ENCODE measurements at regions of chr2 and their contacts with region 1.

Region 1: GRCh38 chr2:9656270-9656766 is 25.5 kb upstream of the YWHAQ start:
- DNase-seq: peak; percentile 71
- H3K4me3 Mint-ChIP-seq: peak overlapping the region; percentile 35
- H3K27ac Mint-ChIP-seq: peak overlapping the region; percentile 91
- H3K4me1 Mint-ChIP-seq: peaks cover 48% of the 10 kb centered on the region
- H3K27me3 Mint-ChIP-seq: peaks cover 3% of the 10 kb centered on the region

Region 2: GRCh38 chr2:9548506-9548905 is 107.8 kb before region 1 on chr2:
- intact Hi-C with region 1: loop called (anchors 1 kb)
- DNase-seq: no peak
- H3K4me3 Mint-ChIP-seq: peak overlapping the region; percentile 57
- H3K27ac Mint-ChIP-seq: peak overlapping the region; percentile 69
- H3K4me1 Mint-ChIP-seq: peaks cover 60% of the 10 kb centered on the region
- H3K27me3 Mint-ChIP-seq: no peaks in the 10 kb centered on the region

Region 3: GRCh38 chr2:9630749-9631483 is 25.4 kb before region 1 on chr2 and contains the start of gene YWHAQ:
- intact Hi-C with region 1: loop called (anchors 1 kb)
- DNase-seq: peak; percentile 97
- H3K4me3 Mint-ChIP-seq: peak within 1 kb of the TSS; percentile 97
- H3K27ac Mint-ChIP-seq: peak within 1 kb of the TSS; percentile 93
- H3K4me1 Mint-ChIP-seq: peaks cover 45% of the 10 kb centered on the region
- H3K27me3 Mint-ChIP-seq: peaks cover 9% of the 10 kb centered on the region
- total RNA-seq, gene YWHAQ: 290 and 311 TPM in 2 replicates

Region 4: GRCh38 chr2:9697909-9698308 is 41.6 kb after region 1 on chr2:
- intact Hi-C with region 1: loop called (anchors 1 kb)
- DNase-seq: no peak
- H3K4me3 Mint-ChIP-seq: peak overlapping the region; percentile 1
- H3K27ac Mint-ChIP-seq: peak overlapping the region; percentile 85
- H3K4me1 Mint-ChIP-seq: peaks cover 41% of the 10 kb centered on the region
- H3K27me3 Mint-ChIP-seq: no peaks in the 10 kb centered on the region

Region 5: DNA sequence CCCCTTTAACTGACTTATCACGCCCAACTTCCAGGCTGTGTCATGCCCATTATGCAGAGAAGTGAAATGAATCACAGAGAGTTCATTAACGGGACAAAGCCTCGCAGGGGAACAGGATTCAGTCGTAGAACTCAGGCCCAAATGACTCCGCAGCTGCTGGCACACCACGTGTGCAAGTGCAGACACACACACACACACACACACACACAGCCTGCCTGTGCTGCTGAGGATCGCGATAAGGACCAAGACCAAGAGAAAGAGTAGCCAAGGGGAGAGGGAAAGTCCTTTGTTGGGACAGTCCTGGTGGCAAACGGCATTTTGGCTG is 96.9 kb after region 1 on chr2:
- intact Hi-C with region 1: loop called (anchors 1 kb)
- DNase-seq: peak; percentile 45
- H3K4me3 Mint-ChIP-seq: peak overlapping the region; percentile 77
- H3K27ac Mint-ChIP-seq: peak overlapping the region; percentile 96
- H3K4me1 Mint-ChIP-seq: peaks cover 70% of the 10 kb centered on the region
- H3K27me3 Mint-ChIP-seq: peaks cover 34% of the 10 kb centered on the region

Region 6: GRCh38 chr2:10122386-10123280 is 466.3 kb after region 1 on chr2 and contains the start of gene RRM2:
- intact Hi-C with region 1: loop called (anchors 5 kb)
- DNase-seq: peak; percentile 92
- H3K4me3 Mint-ChIP-seq: peak within 1 kb of the TSS; percentile 99
- H3K27ac Mint-ChIP-seq: peak within 1 kb of the TSS; percentile 100
- H3K4me1 Mint-ChIP-seq: peaks cover 64% of the 10 kb centered on the region
- H3K27me3 Mint-ChIP-seq: no peaks in the 10 kb centered on the region
- total RNA-seq, gene RRM2: 328 and 351 TPM in 2 replicates